H1 (cell line): ENCODE measurements at regions of chr12 and their contacts with region 1.

Region 1: GRCh38 chr12:12916135-12916944 is 25.0 kb downstream of the GPRC5A start:
- DNase-seq: peak; percentile 57 to 94
- H3K4me3 ChIP-seq: no peak overlapping the region
- H3K27ac ChIP-seq: no peak overlapping the region
- H3K4me1 ChIP-seq: peaks cover 0 to 6% (median 1%) of the 10 kb centered on the region in 4 experiments; a peak in 4 of 7 replicates
- H3K27me3 ChIP-seq: no peaks in the 10 kb centered on the region; a peak in 1 of 7 replicates
- CTCF ChIP-seq: peak; percentile 93 to 99 (median 94)
- EP300 ChIP-seq: no peak
- POLR2A ChIP-seq: no peak
- RAD21 ChIP-seq: peak; percentile 99

Region 2: DNA sequence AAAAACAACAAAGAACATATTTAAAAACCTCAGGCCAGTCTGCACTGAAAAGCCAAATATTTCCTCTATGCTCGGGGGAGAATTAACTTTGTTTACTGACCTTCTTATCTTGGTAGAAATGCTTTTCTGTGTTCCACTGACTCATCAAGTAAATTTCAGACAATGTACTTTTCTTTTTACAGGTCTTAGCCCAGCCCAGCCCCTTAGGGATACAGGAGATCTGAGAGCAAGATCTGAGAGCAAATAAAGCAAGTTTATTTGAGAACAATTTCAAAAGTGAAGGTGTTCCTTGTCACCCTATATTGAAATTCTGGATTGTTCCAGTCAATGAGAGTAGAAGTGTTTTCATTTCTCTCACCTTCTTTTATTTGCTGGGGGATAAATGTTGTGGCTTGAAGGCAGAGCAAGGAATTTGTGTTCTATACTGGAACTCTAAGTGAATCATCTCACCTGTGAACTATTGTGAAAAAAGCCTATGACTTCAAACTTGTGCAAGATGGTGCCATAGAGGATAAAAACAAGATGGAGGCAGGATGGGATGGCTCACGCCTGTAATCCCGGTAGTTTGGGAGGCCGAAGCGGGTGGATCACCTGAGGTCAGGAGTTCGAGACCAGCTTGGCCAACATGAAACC is 32.9 kb before region 1 on chr12:
- CTCF ChIA-PET with region 1: no interaction called
- POLR2A ChIA-PET with region 1: no interaction called
- DNase-seq: no peak
- H3K4me3 ChIP-seq: no peak overlapping the region
- H3K27ac ChIP-seq: no peak overlapping the region
- H3K4me1 ChIP-seq: peaks cover 4 to 11% (median 7%) of the 10 kb centered on the region in 4 experiments; a peak in 5 of 7 replicates
- H3K27me3 ChIP-seq: peaks cover 0 to 7% (median 3%) of the 10 kb centered on the region in 4 experiments; a peak in 3 of 7 replicates
- CTCF ChIP-seq: no peak
- EP300 ChIP-seq: no peak
- POLR2A ChIP-seq: no peak
- RAD21 ChIP-seq: no peak

Region 3: GRCh38 chr12:12930633-12931219 is 14.4 kb after region 1 on chr12:
- CTCF ChIA-PET with region 1: interaction called, 10 read pairs
- POLR2A ChIA-PET with region 1: no interaction called
- DNase-seq: no peak
- H3K4me3 ChIP-seq: no peak overlapping the region
- H3K27ac ChIP-seq: no peak overlapping the region
- H3K4me1 ChIP-seq: no peaks in the 10 kb centered on the region
- H3K27me3 ChIP-seq: no peaks in the 10 kb centered on the region
- CTCF ChIP-seq: no peak
- EP300 ChIP-seq: no peak
- POLR2A ChIP-seq: no peak
- RAD21 ChIP-seq: no peak

Region 4: GRCh38 chr12:12964255-12964654 is 47.9 kb after region 1 on chr12:
- CTCF ChIA-PET with region 1: interaction called, 29 read pairs
- POLR2A ChIA-PET with region 1: no interaction called
- DNase-seq: no peak
- H3K4me3 ChIP-seq: no peak overlapping the region
- H3K27ac ChIP-seq: no peak overlapping the region
- H3K4me1 ChIP-seq: no peaks in the 10 kb centered on the region
- H3K27me3 ChIP-seq: no peaks in the 10 kb centered on the region
- CTCF ChIP-seq: no peak
- EP300 ChIP-seq: no peak
- POLR2A ChIP-seq: no peak
- RAD21 ChIP-seq: no peak

Region 5: GRCh38 chr12:12975322-12976077 is 59.2 kb after region 1 on chr12:
- CTCF ChIA-PET with region 1: interaction called, 118 read pairs
- POLR2A ChIA-PET with region 1: interaction called, 3 read pairs
- DNase-seq: no peak
- H3K4me3 ChIP-seq: no peak overlapping the region
- H3K27ac ChIP-seq: no peak overlapping the region
- H3K4me1 ChIP-seq: peaks cover 0 to 3% (median 0%) of the 10 kb centered on the region in 4 experiments; a peak in 1 of 7 replicates
- H3K27me3 ChIP-seq: no peaks in the 10 kb centered on the region
- CTCF ChIP-seq: peak; percentile 60 to 80 (median 73)
- EP300 ChIP-seq: no peak
- POLR2A ChIP-seq: no peak
- RAD21 ChIP-seq: peak; percentile 75 to 84

Region 6: DNA sequence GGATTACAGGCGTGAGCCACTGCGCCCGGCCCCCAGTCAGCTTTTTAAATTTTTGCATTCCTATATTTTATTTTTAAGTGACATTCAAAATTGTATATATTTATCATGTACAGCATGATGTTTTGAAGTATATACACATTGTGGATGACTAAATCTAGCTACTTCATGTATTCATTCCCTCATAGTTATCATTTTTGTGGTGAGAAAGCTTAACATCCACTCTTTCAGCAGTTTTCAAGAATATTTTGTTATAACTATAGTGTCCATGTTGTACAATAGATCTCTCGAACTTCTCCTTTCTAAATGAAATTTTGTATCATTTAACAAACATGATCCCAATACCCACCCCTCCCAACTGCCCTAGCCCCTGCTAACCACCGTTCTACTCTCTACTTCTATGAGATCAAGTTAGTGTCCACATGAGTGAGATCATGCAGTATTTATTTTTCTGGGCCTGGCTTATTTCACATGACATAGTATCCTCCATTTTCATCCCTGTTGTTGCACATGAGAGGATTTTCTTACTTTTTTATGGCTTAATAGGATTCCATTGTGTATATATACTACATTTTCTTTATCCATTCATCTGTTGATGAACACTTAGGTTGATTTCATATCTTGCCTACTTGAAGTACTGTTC is 92.5 kb after region 1 on chr12:
- CTCF ChIA-PET with region 1: no interaction called
- POLR2A ChIA-PET with region 1: no interaction called
- DNase-seq: no peak
- H3K4me3 ChIP-seq: no peak overlapping the region
- H3K27ac ChIP-seq: no peak overlapping the region
- H3K4me1 ChIP-seq: peaks cover 6 to 17% (median 12%) of the 10 kb centered on the region in 4 experiments
- H3K27me3 ChIP-seq: no peaks in the 10 kb centered on the region
- CTCF ChIP-seq: no peak
- EP300 ChIP-seq: no peak
- POLR2A ChIP-seq: no peak
- RAD21 ChIP-seq: no peak

Region 7: GRCh38 chr12:13028825-13029570 is 112.7 kb after region 1 on chr12:
- CTCF ChIA-PET with region 1: no interaction called
- POLR2A ChIA-PET with region 1: no interaction called
- DNase-seq: no peak
- H3K4me3 ChIP-seq: peak overlapping the region in 1 of 4 experiments; percentile 3; a peak in 1 of 8 replicates
- H3K27ac ChIP-seq: 0 out of 2 replicates have a peak overlapping the region, but pooled peaks have one; percentile 2
- H3K4me1 ChIP-seq: peaks cover 2 to 6% (median 5%) of the 10 kb centered on the region in 4 experiments; a peak in 5 of 7 replicates
- H3K27me3 ChIP-seq: no peaks in the 10 kb centered on the region
- CTCF ChIP-seq: peak in 1 of 3 experiments; percentile 22; a peak in 1 of 4 replicates
- EP300 ChIP-seq: peak in 1 of 2 experiments; percentile 20; a peak in 1 of 3 replicates
- POLR2A ChIP-seq: no peak
- RAD21 ChIP-seq: no peak; a peak in 1 of 4 replicates

Region 8: DNA sequence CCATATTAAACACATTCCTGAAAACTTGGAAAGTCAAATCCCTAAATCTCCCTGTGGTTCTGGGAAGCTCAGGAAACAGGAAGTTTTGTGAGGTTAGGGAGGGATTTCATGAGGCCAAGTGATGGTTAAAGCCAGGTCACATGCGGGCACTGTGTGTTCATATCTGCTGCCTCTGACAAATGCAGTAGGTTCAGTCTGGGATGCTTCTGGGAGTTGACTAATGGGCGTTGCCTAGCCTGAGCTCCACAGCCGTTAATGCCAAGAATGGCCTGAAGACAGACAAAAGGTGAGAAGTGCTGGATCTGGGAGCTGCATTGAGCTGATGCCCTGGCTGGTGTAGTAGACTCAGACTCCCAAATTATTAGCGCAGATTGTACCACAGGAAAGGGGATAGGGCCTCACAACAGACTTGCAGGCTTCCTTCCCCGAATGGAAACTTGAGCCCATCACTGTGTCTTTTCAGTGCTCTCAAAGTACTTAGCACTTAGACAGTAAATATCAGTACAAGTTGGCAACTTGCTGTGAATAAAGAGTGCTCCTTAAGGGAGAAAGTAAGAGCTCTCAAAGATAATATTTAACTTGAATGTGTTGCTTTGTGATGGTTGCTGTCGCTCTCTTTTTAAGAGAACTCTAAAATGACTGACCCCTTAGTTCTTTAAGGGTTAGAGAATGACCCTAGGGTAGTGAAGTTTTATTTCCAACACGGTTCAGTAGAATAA is 169.8 kb after region 1 on chr12:
- CTCF ChIA-PET with region 1: interaction called, 10 read pairs
- POLR2A ChIA-PET with region 1: interaction called, 3 read pairs
- DNase-seq: no peak
- H3K4me3 ChIP-seq: no peak overlapping the region
- H3K27ac ChIP-seq: no peak overlapping the region
- H3K4me1 ChIP-seq: peaks cover 20 to 26% (median 24%) of the 10 kb centered on the region in 4 experiments
- H3K27me3 ChIP-seq: no peaks in the 10 kb centered on the region
- CTCF ChIP-seq: no peak
- EP300 ChIP-seq: no peak
- POLR2A ChIP-seq: no peak
- RAD21 ChIP-seq: no peak